ENCODE measurements at regions of chr4 and their contacts with region 1.

Region 1: GRCh38 chr4:160319221-160319867 is 1216.5 kb downstream of the RAPGEF2 start:
- DNase-seq: no peak
- ATAC-seq: no peak
- H3K4me3 ChIP-seq: no peak overlapping the region
- H3K27ac ChIP-seq: no peak overlapping the region
- H3K4me1 ChIP-seq: no peaks in the 10 kb centered on the region
- H3K27me3 ChIP-seq: no peaks in the 10 kb centered on the region
- CTCF ChIP-seq: no peak
- POLR2A ChIP-seq: no peak
- RAD21 ChIP-seq: no peak

Region 2: DNA sequence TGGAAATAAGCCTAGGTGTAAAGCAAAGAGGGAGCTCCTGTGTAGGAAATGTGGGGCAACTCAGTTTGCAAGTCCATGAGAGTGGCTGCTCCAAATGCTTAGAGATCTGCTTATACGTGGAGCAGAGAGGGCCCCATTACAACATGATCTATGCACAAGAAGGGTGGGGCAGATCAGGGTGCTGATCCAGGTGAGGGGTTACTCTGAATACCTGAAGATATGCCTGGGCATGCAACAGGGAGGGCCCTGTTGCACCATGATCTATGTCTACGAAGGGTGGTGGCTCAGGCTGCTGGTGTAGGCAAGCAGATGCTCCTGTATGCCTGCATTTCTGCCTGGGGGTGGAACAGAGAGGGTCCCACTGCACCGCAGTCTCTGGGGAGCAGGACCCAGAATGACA is 95.3 kb before region 1 on chr4:
- CTCF ChIA-PET with region 1: no interaction called
- POLR2A ChIA-PET with region 1: no interaction called
- dilution Hi-C with region 1: no loop called
- in situ Hi-C with region 1: no loop called
- intact Hi-C with region 1: loop called (anchors 1 kb)
- DNase-seq: no peak
- ATAC-seq: no peak
- H3K4me3 ChIP-seq: no peak overlapping the region
- H3K27ac ChIP-seq: no peak overlapping the region
- H3K4me1 ChIP-seq: no peaks in the 10 kb centered on the region
- H3K27me3 ChIP-seq: no peaks in the 10 kb centered on the region
- CTCF ChIP-seq: no peak
- POLR2A ChIP-seq: no peak
- RAD21 ChIP-seq: no peak